ENCODE measurements at regions of chr3 and their contacts with region 1.

Region 1: GRCh38 chr3:17841190-17841828 is 98.9 kb upstream of the TBC1D5 start:
- DNase-seq: peak; percentile 58 to 82 (median 64)
- ATAC-seq: peak in 3 of 4 donors; percentile 85 to 91 (median 91)
- H3K4me3 ChIP-seq: no peak overlapping the region
- H3K27ac ChIP-seq: no peak overlapping the region
- H3K4me1 ChIP-seq: peaks cover 0 to 2% (median 0%) of the 10 kb centered on the region in 12 donors
- H3K27me3 ChIP-seq: peaks cover 0 to 10% (median 0%) of the 10 kb centered on the region in 9 donors
- CTCF ChIP-seq: peak; percentile 87 to 97 (median 92)
- POLR2A ChIP-seq: no peak

Region 2: GRCh38 chr3:16600780-16601539 is 1240.3 kb before region 1 on chr3:
- intact Hi-C with region 1: loop called in 1 of 10 experiments (anchors 5 kb)
- DNase-seq: peak; percentile 73 to 85 (median 80)
- ATAC-seq: peak; percentile 48 to 76 (median 68)
- H3K4me3 ChIP-seq: peak overlapping the region in 3 of 12 donors; percentile 0 to 19 (median 14)
- H3K27ac ChIP-seq: no peak overlapping the region
- H3K4me1 ChIP-seq: peaks cover 0 to 7% (median 0%) of the 10 kb centered on the region in 12 donors
- H3K27me3 ChIP-seq: no peaks in the 10 kb centered on the region
- CTCF ChIP-seq: peak; percentile 73 to 96 (median 89)
- POLR2A ChIP-seq: no peak

Region 3: GRCh38 chr3:17258823-17259436 is 582.4 kb before region 1 on chr3:
- intact Hi-C with region 1: loop called in 9 of 10 experiments (anchors 2 to 10 kb)
- DNase-seq: no peak
- ATAC-seq: no peak
- H3K4me3 ChIP-seq: no peak overlapping the region
- H3K27ac ChIP-seq: no peak overlapping the region
- H3K4me1 ChIP-seq: no peaks in the 10 kb centered on the region
- H3K27me3 ChIP-seq: no peaks in the 10 kb centered on the region
- CTCF ChIP-seq: peak; percentile 63 to 91 (median 79)
- POLR2A ChIP-seq: no peak

Region 4: GRCh38 chr3:17431004-17431403 is 410.3 kb before region 1 on chr3:
- intact Hi-C with region 1: loop called in 9 of 10 experiments (anchors 1 to 5 kb)
- DNase-seq: no peak
- ATAC-seq: peak in 1 of 4 donors; percentile 73
- H3K4me3 ChIP-seq: no peak overlapping the region
- H3K27ac ChIP-seq: no peak overlapping the region
- H3K4me1 ChIP-seq: peaks cover 0 to 3% (median 0%) of the 10 kb centered on the region in 12 donors
- H3K27me3 ChIP-seq: no peaks in the 10 kb centered on the region
- CTCF ChIP-seq: peak; percentile 24 to 70 (median 54)
- POLR2A ChIP-seq: no peak

Region 5: GRCh38 chr3:17639765-17640164 is 201.5 kb before region 1 on chr3:
- intact Hi-C with region 1: loop called in 5 of 10 experiments (anchors 2 to 10 kb)
- DNase-seq: no peak
- ATAC-seq: peak in 2 of 4 donors; percentile 49 to 57
- H3K4me3 ChIP-seq: no peak overlapping the region
- H3K27ac ChIP-seq: no peak overlapping the region
- H3K4me1 ChIP-seq: peaks cover 0 to 47% (median 11%) of the 10 kb centered on the region in 12 donors
- H3K27me3 ChIP-seq: no peaks in the 10 kb centered on the region
- CTCF ChIP-seq: no peak
- POLR2A ChIP-seq: no peak

Region 6: GRCh38 chr3:17645072-17645698 is 196.1 kb before region 1 on chr3:
- intact Hi-C with region 1: loop called (anchors 2 to 10 kb)
- DNase-seq: peak in 1 of 5 donors; percentile 14
- ATAC-seq: peak in 3 of 4 donors; percentile 50 to 66 (median 53)
- H3K4me3 ChIP-seq: no peak overlapping the region
- H3K27ac ChIP-seq: no peak overlapping the region
- H3K4me1 ChIP-seq: peaks cover 0 to 23% (median 5%) of the 10 kb centered on the region in 12 donors
- H3K27me3 ChIP-seq: no peaks in the 10 kb centered on the region
- CTCF ChIP-seq: peak; percentile 48 to 80 (median 72)
- POLR2A ChIP-seq: no peak

Region 7: DNA sequence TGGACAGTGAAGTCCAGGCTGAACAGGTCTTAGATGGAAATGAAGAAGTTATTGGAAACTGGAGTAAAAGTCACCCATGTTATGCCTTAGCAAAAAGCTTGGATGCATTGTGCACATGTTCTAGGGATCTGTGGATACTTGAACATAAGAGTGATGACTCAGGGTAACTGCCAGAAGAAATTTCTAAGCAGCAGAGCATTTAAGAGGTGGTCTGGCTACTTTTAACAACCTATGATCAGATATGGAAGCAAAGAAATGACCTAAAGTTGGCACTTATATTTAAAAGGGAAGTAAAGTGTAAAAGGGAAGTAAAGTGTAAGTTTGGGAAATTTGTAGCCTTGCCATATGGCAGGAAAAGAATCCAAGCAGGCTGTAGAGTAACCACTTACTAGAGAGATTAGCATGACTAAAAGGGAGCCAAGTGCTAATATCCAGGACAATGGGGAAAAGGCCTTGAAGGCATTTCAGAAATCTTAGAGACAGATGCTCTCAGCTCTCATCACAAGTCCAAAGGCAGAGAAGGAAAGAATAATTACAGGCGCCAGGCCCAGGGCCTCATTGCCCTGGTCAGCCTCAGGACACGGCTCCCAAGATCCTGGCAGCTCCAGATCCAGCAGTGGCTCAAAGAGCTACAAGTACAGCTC is 1233.1 kb after region 1 on chr3:
- intact Hi-C with region 1: no loop called
- DNase-seq: no peak
- ATAC-seq: no peak
- H3K4me3 ChIP-seq: no peak overlapping the region
- H3K27ac ChIP-seq: no peak overlapping the region
- H3K4me1 ChIP-seq: no peaks in the 10 kb centered on the region
- H3K27me3 ChIP-seq: no peaks in the 10 kb centered on the region
- CTCF ChIP-seq: no peak
- POLR2A ChIP-seq: no peak